ENCODE measurements at regions of chr17 and their contacts with region 1.

Region 1: GRCh38 chr17:47663912-47664625 is 14.3 kb downstream of the KPNB1 start:
- DNase-seq: peak; percentile 75 to 76
- ATAC-seq: peak; percentile 88 to 95
- H3K4me3 ChIP-seq: no peak overlapping the region
- H3K27ac ChIP-seq: no peak overlapping the region
- H3K4me1 ChIP-seq: peaks cover 9% of the 10 kb centered on the region; the same call in 2 of the 3 replicates
- CTCF ChIP-seq: peak; percentile 88
- EP300 ChIP-seq: no peak
- POLR2A ChIP-seq: no peak
- RAD21 ChIP-seq: peak; percentile 59 to 66; a peak in 3 of 5 replicates

Region 2: DNA sequence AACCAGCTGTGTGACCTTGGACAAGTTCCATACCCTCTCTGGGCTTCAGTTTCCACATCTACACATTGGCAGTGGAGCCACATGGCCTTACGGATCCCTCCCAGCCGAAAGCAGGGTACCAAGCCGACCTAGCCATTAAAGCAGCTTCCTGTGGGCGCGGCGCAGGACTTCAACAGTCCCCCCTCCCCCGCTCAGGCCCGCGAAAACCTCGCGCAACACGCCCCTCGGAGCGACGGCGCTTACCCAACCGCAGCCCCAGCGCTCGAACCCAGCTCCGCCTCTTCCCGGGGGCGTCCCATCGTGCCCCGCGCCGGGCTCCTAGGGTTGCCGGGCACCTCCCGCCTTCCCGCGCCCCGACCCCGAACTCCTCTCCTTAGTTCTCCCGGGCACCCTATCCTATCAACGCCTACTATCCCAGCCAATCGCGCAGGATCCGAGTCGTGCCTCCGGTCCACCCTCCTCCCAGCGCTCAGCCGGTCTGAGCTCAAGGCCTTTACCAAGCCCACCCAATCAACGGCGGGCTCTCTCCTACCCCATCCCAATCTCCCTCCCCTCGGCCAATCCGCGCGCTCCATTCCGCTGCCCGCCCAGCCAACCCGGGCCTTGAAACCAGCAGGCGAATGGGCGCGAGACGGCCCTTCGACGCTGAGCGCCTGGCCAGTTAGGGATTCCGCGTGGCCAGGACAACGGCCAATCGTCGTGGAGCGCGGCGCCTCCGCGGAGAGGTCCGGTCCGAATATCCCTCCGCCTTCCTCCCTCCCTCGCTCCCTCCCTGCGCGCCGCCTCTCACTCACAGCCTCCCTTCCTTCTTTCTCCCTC is 14.7 kb before region 1 on chr17 and contains the start of gene KPNB1:
- CTCF ChIA-PET with region 1: interaction called, 138 read pairs
- POLR2A ChIA-PET with region 1: interaction called, 48 read pairs
- DNase-seq: peak; percentile 97 to 100
- ATAC-seq: peak; percentile 87 to 93
- H3K4me3 ChIP-seq: peak within 1 kb of the TSS; percentile 69
- H3K27ac ChIP-seq: peak within 1 kb of the TSS; percentile 92 to 95
- H3K4me1 ChIP-seq: peaks cover 37% of the 10 kb centered on the region
- CTCF ChIP-seq: no peak
- EP300 ChIP-seq: no peak
- POLR2A ChIP-seq: peak; percentile 71
- RAD21 ChIP-seq: 0 out of 5 replicates have a peak, but pooled peaks of 1 of the 2 experiments have one; percentile 7
- polyA plus RNA-seq, gene KPNB1: 358 and 452 TPM in 2 replicates

Region 3: GRCh38 chr17:47675380-47676198 is 11.5 kb after region 1 on chr17:
- CTCF ChIA-PET with region 1: interaction called, 106 read pairs
- POLR2A ChIA-PET with region 1: no interaction called
- DNase-seq: no peak
- ATAC-seq: no peak
- H3K4me3 ChIP-seq: no peak overlapping the region
- H3K27ac ChIP-seq: no peak overlapping the region
- H3K4me1 ChIP-seq: no peaks in the 10 kb centered on the region
- CTCF ChIP-seq: no peak
- EP300 ChIP-seq: no peak
- POLR2A ChIP-seq: no peak
- RAD21 ChIP-seq: no peak

Region 4: GRCh38 chr17:47687748-47688147 is 23.7 kb after region 1 on chr17:
- CTCF ChIA-PET with region 1: interaction called, 15 read pairs
- POLR2A ChIA-PET with region 1: interaction called, 6 read pairs
- DNase-seq: no peak
- ATAC-seq: peak; percentile 47 to 57
- H3K4me3 ChIP-seq: no peak overlapping the region
- H3K27ac ChIP-seq: no peak overlapping the region
- H3K4me1 ChIP-seq: peaks cover 31% of the 10 kb centered on the region
- CTCF ChIP-seq: no peak
- EP300 ChIP-seq: no peak
- POLR2A ChIP-seq: no peak
- RAD21 ChIP-seq: no peak

Region 5: GRCh38 chr17:47763913-47764582 is 100.0 kb after region 1 on chr17:
- CTCF ChIA-PET with region 1: no interaction called
- POLR2A ChIA-PET with region 1: no interaction called
- DNase-seq: no peak
- ATAC-seq: no peak
- H3K4me3 ChIP-seq: no peak overlapping the region
- H3K27ac ChIP-seq: no peak overlapping the region
- H3K4me1 ChIP-seq: no peaks in the 10 kb centered on the region
- CTCF ChIP-seq: no peak
- EP300 ChIP-seq: no peak
- POLR2A ChIP-seq: no peak
- RAD21 ChIP-seq: no peak

Region 6: DNA sequence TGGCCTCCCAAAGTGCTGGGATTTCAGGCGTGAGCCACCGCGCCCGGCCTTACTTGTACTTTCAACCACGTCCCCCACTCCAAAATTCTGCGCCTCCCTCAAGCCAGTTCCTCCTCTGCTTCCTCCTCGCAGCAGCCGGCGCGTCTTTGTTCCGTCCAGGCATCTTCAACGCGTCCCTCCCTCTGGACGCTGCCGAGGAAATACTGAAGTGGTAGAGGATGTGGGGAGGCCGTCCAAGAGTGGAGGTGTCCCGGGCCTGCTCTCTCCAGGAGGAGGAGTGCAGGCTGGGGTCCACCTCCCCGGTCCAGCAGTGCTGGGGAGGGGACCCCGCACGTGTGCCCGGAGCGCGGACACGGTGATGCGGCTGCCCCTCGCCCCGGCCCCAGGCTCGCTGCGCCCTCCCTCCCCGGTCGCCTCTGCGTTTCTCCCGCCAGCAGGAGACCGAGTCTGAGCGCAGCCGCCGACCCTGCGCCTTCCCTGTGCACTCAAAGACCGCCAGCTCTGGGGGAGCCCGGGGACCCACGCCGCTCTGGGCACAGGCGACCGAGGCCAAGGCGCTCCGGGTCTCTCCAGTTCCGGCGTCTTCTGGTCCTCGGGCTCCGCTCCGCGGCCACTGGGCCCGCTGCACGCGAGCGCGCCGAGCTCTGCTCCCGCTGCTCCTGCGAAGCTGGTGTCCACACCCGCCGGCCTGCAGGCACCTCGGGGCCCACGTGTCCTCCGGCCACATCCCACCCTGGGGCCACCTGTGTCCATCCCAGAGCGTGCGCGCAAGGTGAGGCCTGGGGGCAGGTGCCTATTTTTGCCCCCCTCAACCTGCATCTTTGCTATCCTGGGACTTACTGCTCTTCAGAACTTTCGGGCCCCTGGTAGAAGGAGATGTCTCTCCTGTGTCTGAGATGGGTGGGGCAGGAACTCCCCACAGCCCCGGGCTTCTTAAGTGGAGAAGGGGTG is 125.8 kb after region 1 on chr17:
- CTCF ChIA-PET with region 1: interaction called, 16 read pairs
- POLR2A ChIA-PET with region 1: no interaction called
- DNase-seq: peak; percentile 79 to 92
- ATAC-seq: peak; percentile 99
- H3K4me3 ChIP-seq: peak overlapping the region; percentile 48
- H3K27ac ChIP-seq: peak overlapping the region; percentile 35 to 78; a peak in 4 of 6 replicates
- H3K4me1 ChIP-seq: peaks cover 3% of the 10 kb centered on the region; the same call in 1 of the 3 replicates
- CTCF ChIP-seq: peak; percentile 70
- EP300 ChIP-seq: no peak
- POLR2A ChIP-seq: no peak
- RAD21 ChIP-seq: peak; percentile 71 to 84

Region 7: GRCh38 chr17:47802341-47803022 is 138.4 kb after region 1 on chr17:
- CTCF ChIA-PET with region 1: interaction called, 47 read pairs
- POLR2A ChIA-PET with region 1: no interaction called
- DNase-seq: peak; percentile 77 to 92
- ATAC-seq: peak; percentile 91 to 95
- H3K4me3 ChIP-seq: no peak overlapping the region
- H3K27ac ChIP-seq: no peak overlapping the region
- H3K4me1 ChIP-seq: no peaks in the 10 kb centered on the region
- CTCF ChIP-seq: peak; percentile 84
- EP300 ChIP-seq: no peak
- POLR2A ChIP-seq: no peak
- RAD21 ChIP-seq: peak; percentile 89 to 90

Measured in A549 (cell line).